ENCODE measurements at regions of chr18 and their contacts with region 1.

Region 1: GRCh38 chr18:32366586-32367538 is 103.8 kb downstream of the GAREM1 start:
- DNase-seq: peak; percentile 61
- H3K4me3 Mint-ChIP-seq: no peak overlapping the region
- H3K27ac Mint-ChIP-seq: peak overlapping the region; percentile 40
- H3K4me1 Mint-ChIP-seq: peaks cover 59% of the 10 kb centered on the region
- H3K27me3 Mint-ChIP-seq: no peaks in the 10 kb centered on the region
- CTCF ChIP-seq: no peak

Region 2: DNA sequence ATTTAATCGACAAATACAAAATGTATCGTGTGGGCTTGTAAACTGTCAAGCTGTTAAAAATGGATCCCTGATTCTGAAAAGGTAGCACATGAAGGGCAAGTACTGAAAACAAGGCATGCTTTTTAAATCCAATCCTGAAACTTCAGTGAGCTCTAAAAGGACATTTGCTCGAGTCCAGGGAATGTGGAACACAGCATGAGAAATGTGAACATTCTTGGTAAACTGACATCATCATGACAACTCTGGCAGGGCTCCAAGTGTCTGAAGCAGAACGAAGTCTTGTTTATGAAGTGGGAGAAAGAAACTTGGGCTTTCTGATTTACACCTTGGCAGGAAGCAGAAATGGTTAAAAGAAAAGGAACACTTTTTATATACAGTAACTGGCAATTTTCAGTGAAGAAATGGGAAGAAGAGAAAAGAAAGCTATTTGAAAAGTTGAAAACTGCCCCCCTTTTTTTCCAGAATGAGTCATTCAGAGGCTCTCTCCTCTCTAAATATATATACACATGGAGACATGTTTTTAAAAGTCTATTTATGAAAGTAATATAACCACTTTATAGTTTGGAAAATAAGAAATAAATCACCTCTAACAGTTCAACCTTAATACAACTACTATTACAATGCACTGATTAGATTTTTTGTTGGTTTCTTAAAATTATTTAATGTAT is 17.0 kb before region 1 on chr18:
- CTCF ChIA-PET with region 1: interaction called, 3 read pairs
- POLR2A ChIA-PET with region 1: interaction called, 29 read pairs
- intact Hi-C with region 1: no loop called
- DNase-seq: peak; percentile 94
- H3K4me3 Mint-ChIP-seq: peak overlapping the region; percentile 67
- H3K27ac Mint-ChIP-seq: peak overlapping the region; percentile 94
- H3K4me1 Mint-ChIP-seq: peaks cover 28% of the 10 kb centered on the region
- H3K27me3 Mint-ChIP-seq: no peaks in the 10 kb centered on the region
- CTCF ChIP-seq: no peak

Measured in MCF 10A (cell line).